ENCODE measurements at regions of chr17 and their contacts with region 1.

Region 1: GRCh38 chr17:57892146-57892828 is 42.4 kb upstream of the MRPS23 start:
- DNase-seq: peak; percentile 95
- H3K4me3 ChIP-seq: no peak overlapping the region
- H3K27ac ChIP-seq: peak overlapping the region; percentile 97 to 100 (median 98)
- H3K4me1 ChIP-seq: peaks cover 0 to 98% (median 91%) of the 10 kb centered on the region in 4 donors
- H3K27me3 ChIP-seq: no peaks in the 10 kb centered on the region
- CTCF ChIP-seq: peak; percentile 98 to 99 (median 98)
- EP300 ChIP-seq: no peak
- POLR2A ChIP-seq: no peak

Region 2: DNA sequence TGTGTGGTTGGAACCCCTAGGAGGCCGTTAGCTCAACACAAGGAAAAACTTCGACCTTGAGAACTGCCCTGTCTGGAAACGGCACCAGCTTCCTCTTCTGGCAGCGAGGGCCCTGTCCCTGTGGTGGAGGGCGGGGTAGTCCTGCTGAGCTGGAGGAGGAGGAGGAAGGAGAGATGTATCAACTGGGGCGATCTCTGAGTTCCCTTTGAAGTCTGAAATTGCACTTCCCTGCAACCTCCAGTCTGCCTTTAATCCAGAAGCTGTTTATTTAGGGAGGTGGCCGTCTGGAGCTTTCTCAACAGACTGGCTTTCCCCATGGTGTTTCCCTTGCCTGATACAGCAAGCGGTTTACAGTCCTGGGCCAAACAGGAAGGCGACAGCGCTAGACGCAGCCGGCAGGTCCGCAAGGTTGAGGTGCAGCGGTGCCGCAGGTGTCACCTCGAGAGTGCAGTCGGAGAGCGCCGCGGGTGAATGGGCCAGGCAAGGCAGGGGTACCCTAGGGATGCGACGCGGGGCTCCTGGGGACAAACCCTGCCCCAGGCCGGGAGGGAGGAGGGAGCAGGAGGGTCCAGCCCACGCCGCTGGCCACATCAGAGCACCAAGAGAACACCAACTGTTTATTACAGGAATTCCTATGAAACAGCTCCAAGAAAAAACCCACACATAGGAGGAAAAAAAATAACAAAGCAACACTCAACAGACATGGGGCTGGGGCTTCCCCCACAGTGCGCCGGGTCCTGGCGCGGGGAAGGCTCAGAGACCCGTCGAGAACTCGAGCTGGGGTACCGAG is 31.1 kb before region 1 on chr17:
- intact Hi-C with region 1: loop called (anchors 2 kb)
- DNase-seq: peak; percentile 85
- H3K4me3 ChIP-seq: peak overlapping the region; percentile 38 to 55 (median 50)
- H3K27ac ChIP-seq: peak overlapping the region; percentile 92 to 97 (median 94)
- H3K4me1 ChIP-seq: peaks cover 0 to 66% (median 56%) of the 10 kb centered on the region in 4 donors
- H3K27me3 ChIP-seq: no peaks in the 10 kb centered on the region
- CTCF ChIP-seq: no peak
- EP300 ChIP-seq: peak in 1 of 4 donors; percentile 16
- POLR2A ChIP-seq: no peak

Region 3: GRCh38 chr17:57939797-57940196 is 47.5 kb after region 1 on chr17:
- intact Hi-C with region 1: loop called (anchors 2 kb)
- DNase-seq: no peak
- H3K4me3 ChIP-seq: no peak overlapping the region
- H3K27ac ChIP-seq: peak overlapping the region; percentile 97 to 100 (median 99)
- H3K4me1 ChIP-seq: peaks cover 0 to 100% (median 97%) of the 10 kb centered on the region in 4 donors
- H3K27me3 ChIP-seq: no peaks in the 10 kb centered on the region
- CTCF ChIP-seq: no peak
- EP300 ChIP-seq: no peak
- POLR2A ChIP-seq: no peak

Region 4: DNA sequence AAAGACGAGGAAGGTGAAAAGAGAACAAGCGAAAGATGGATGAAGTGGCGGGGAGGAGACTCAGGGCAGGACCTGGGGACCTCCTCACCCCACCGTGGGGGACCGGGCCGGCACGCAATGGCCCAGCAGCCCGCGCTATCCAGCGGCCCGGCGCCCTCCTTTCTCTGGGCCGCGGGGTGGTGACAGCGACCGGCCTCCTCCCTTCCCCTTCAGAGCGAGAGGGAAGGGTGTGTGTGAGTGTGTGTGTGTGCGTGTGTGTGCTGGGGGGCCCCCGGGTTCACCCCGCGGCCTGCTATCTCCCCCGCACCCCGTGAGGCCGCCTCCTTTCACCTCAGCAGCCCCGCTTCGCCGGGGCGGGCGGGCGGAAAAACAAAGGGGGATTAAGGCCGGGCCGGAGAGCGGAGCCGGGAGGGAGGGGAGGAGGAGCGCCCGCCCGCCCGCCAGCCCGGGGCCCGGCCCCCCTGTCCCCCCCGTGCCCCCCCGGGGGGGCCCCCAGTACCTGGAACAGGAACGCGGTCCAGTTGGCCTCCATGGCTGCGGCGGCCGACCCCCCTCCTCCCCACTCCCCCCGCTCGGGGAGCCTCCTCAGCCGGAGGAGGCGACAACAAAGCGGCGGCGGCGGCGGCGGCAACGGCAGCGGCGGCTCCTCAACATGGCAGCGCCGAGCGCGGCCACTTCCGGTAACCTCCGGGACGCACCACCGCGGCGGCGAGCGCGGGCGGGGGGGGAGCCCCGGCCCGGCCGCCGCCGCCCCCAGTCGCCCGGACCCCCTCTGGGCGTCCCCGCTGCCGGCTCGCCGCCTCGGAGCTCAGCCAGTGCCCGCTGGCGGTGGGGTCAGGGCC is 95.5 kb after region 1 on chr17 and contains the start of gene VEZF1:
- intact Hi-C with region 1: loop called (anchors 2 kb)
- DNase-seq: peak; percentile 90
- H3K4me3 ChIP-seq: peak within 1 kb of the TSS; percentile 80 to 91 (median 86)
- H3K27ac ChIP-seq: peak within 1 kb of the TSS; percentile 95 to 99 (median 97)
- H3K4me1 ChIP-seq: peaks cover 0 to 55% (median 46%) of the 10 kb centered on the region in 4 donors
- H3K27me3 ChIP-seq: no peaks in the 10 kb centered on the region
- CTCF ChIP-seq: no peak
- EP300 ChIP-seq: no peak
- POLR2A ChIP-seq: peak; percentile 65 to 73
- total RNA-seq, gene VEZF1: 99.8 to 120 (median 105) TPM

Measured in sigmoid colon (tissue), 7 donors.